Activated CD4-positive, alpha-beta T cell treated with anti-CD3 and anti-CD28 coated beads, Interleukin-2, amount 10 ng/mL, durations not matched to agents 24 days and 14 days (primary cell): ENCODE measurements at regions of chr20 and their contacts with region 1.

Region 1: GRCh38 chr20:54649511-54649962 is 174.1 kb downstream of the DOK5 start:
- DNase-seq: peak; percentile 88
- H3K4me3 Mint-ChIP-seq: no peak overlapping the region
- H3K27ac Mint-ChIP-seq: no peak overlapping the region
- H3K4me1 Mint-ChIP-seq: peaks cover 2% of the 10 kb centered on the region
- H3K27me3 Mint-ChIP-seq: no peaks in the 10 kb centered on the region

Region 2: DNA sequence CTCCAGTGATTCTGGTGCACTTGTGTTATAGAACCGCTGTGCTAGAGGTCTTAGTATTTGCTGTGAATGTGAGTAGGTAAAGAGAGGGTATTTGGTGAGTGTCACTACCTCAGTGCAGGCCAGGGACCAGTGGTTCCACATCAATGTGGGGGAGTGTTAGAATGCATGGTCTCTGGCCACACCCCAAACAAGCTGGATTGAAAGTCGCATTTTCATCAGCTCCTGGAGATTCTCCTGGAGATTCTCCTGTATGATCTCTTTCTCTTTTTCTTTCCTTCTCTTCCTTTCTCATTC is 552.4 kb before region 1 on chr20:
- intact Hi-C with region 1: loop called (anchors 2 kb)
- DNase-seq: no peak
- H3K4me3 Mint-ChIP-seq: no peak overlapping the region
- H3K27ac Mint-ChIP-seq: no peak overlapping the region
- H3K4me1 Mint-ChIP-seq: no peaks in the 10 kb centered on the region
- H3K27me3 Mint-ChIP-seq: peaks cover 13% of the 10 kb centered on the region

Region 3: GRCh38 chr20:54207743-54208547 is 441.6 kb before region 1 on chr20 and contains the start of gene PFDN4:
- intact Hi-C with region 1: loop called (anchors 5 kb)
- DNase-seq: peak; percentile 95
- H3K4me3 Mint-ChIP-seq: peak within 1 kb of the TSS; percentile 88
- H3K27ac Mint-ChIP-seq: peak within 1 kb of the TSS; percentile 100
- H3K4me1 Mint-ChIP-seq: peaks cover 39% of the 10 kb centered on the region
- H3K27me3 Mint-ChIP-seq: no peaks in the 10 kb centered on the region
- total RNA-seq, gene PFDN4: 72.2 and 80.5 TPM in 2 replicates

Region 4: GRCh38 chr20:54219751-54220426 is 429.6 kb before region 1 on chr20:
- intact Hi-C with region 1: loop called (anchors 1 kb)
- DNase-seq: no peak
- H3K4me3 Mint-ChIP-seq: no peak overlapping the region
- H3K27ac Mint-ChIP-seq: no peak overlapping the region
- H3K4me1 Mint-ChIP-seq: peaks cover 20% of the 10 kb centered on the region
- H3K27me3 Mint-ChIP-seq: no peaks in the 10 kb centered on the region

Region 5: DNA sequence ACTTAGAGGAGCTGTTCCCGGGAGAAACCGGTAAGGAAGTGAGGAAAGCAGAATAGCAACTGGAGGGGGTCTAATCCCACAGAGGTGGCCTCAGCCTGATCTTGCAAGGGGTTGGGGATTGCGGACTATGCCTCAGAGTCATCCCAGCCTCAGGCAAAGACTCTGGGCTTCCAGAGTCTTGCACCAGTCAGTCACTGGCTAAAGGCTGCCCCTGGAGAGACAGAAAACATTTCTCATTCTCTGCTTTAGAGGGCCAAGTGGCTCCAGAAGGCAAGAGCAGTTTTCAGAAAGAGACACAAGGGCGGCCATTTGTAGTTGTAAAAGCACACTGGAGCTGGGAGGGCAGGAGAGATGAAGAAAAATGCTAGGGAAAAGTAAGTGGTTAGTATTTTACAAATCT is 155.1 kb after region 1 on chr20:
- intact Hi-C with region 1: no loop called
- DNase-seq: no peak
- H3K4me3 Mint-ChIP-seq: no peak overlapping the region
- H3K27ac Mint-ChIP-seq: no peak overlapping the region
- H3K4me1 Mint-ChIP-seq: no peaks in the 10 kb centered on the region
- H3K27me3 Mint-ChIP-seq: no peaks in the 10 kb centered on the region

Region 6: DNA sequence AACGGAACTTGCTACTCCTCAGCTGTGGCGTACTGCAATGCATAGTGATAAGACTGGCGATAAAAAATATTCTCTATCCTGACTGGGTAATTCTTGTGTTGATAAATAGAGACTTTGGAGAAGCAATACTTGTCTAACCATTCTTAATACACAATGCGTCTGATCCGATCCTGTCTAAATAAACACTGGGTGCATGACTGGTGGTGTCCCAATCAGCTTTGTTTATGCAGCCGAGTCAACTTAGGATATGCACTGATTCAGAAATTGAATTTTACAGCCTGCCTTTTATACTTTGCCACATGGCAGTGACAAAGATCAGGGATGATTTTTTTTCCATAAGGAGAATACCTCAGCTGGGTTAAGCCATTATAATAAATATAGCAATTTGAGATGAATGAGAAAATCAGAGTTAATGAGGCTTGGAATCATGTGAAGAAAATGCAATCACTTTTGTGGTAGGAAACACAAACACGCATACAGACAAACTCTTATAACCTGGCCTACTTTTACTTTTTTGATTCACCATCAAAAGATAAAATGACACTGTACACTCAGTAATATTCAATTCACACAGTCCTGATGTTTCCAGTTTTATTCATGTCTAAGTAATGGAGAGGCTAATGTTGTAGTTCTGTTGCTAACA is 213.6 kb after region 1 on chr20:
- intact Hi-C with region 1: no loop called
- DNase-seq: no peak
- H3K4me3 Mint-ChIP-seq: no peak overlapping the region
- H3K27ac Mint-ChIP-seq: no peak overlapping the region
- H3K4me1 Mint-ChIP-seq: no peaks in the 10 kb centered on the region
- H3K27me3 Mint-ChIP-seq: no peaks in the 10 kb centered on the region